ENCODE measurements at regions of chr21 and their contacts with region 1.

Region 1: DNA sequence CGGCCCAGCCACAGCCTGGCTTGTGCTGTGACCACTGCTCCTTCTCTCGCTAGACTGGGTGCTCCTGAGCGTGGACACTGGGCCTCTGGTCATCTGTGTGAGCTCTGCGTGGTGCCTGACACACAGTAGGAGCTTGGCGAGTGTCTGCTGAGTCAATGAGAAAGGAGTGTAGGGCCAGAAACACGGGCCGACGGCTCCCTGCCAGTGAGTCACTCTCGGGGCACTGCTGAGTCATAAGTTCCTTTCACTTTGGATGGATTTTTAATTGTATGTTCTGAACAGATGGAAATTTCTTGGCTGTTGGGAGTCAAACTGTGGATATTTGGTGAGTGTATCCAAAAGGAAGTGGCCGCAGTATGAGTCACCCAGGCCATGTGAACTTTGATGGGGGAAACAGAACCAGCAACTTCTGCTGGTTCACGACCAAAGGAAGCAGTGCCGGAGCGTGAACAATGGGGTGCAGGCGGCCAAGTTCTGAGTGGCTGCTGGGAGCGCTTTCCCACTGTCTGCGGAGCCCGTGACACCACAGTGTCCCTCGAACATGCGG is 41.0 kb upstream of the COL18A1 start:
- DNase-seq: peak; percentile 83 to 96
- H3K4me3 ChIP-seq: peak overlapping the region in 1 of 2 donors; percentile 36
- H3K27ac ChIP-seq: peak overlapping the region; percentile 98 to 99
- H3K4me1 ChIP-seq: peaks cover 21 to 44% of the 10 kb centered on the region in 2 donors
- H3K27me3 ChIP-seq: no peaks in the 10 kb centered on the region
- CTCF ChIP-seq: no peak

Region 2: GRCh38 chr21:44897326-44898010 is 466.5 kb before region 1 on chr21:
- intact Hi-C with region 1: no loop called
- DNase-seq: no peak
- H3K4me3 ChIP-seq: no peak overlapping the region
- H3K27ac ChIP-seq: no peak overlapping the region
- H3K4me1 ChIP-seq: no peaks in the 10 kb centered on the region
- H3K27me3 ChIP-seq: no peaks in the 10 kb centered on the region
- CTCF ChIP-seq: no peak

Region 3: GRCh38 chr21:45074048-45074817 is 289.8 kb before region 1 on chr21 and contains the start of gene ADARB1:
- intact Hi-C with region 1: no loop called
- DNase-seq: peak in 1 of 2 donors; percentile 74
- H3K4me3 ChIP-seq: peak within 1 kb of the TSS; percentile 81 to 98
- H3K27ac ChIP-seq: peak within 1 kb of the TSS; percentile 91
- H3K4me1 ChIP-seq: peaks cover 1 to 21% of the 10 kb centered on the region in 2 donors
- H3K27me3 ChIP-seq: no peaks in the 10 kb centered on the region
- CTCF ChIP-seq: no peak
- total RNA-seq, gene ADARB1: 82.9 TPM

Region 4: GRCh38 chr21:45294509-45295291 is 69.3 kb before region 1 on chr21:
- intact Hi-C with region 1: loop called (anchors 2 kb)
- DNase-seq: peak; percentile 68 to 97
- H3K4me3 ChIP-seq: peak overlapping the region in 1 of 2 donors; percentile 15
- H3K27ac ChIP-seq: peak overlapping the region; percentile 78 to 99
- H3K4me1 ChIP-seq: peaks cover 21 to 30% of the 10 kb centered on the region in 2 donors
- H3K27me3 ChIP-seq: no peaks in the 10 kb centered on the region
- CTCF ChIP-seq: no peak

Region 5: GRCh38 chr21:45386721-45387371 is 22.9 kb after region 1 on chr21:
- intact Hi-C with region 1: no loop called
- DNase-seq: peak in 1 of 2 donors; percentile 81
- H3K4me3 ChIP-seq: no peak overlapping the region
- H3K27ac ChIP-seq: peak overlapping the region in 1 of 2 donors; percentile 19
- H3K4me1 ChIP-seq: peaks cover 0 to 12% of the 10 kb centered on the region in 2 donors
- H3K27me3 ChIP-seq: no peaks in the 10 kb centered on the region
- CTCF ChIP-seq: peak in 2 of 3 experiments; percentile 23 to 42

Region 6: GRCh38 chr21:45680215-45680614 is 316.2 kb after region 1 on chr21:
- intact Hi-C with region 1: no loop called
- DNase-seq: no peak
- H3K4me3 ChIP-seq: no peak overlapping the region
- H3K27ac ChIP-seq: no peak overlapping the region
- H3K4me1 ChIP-seq: peaks cover 0 to 3% of the 10 kb centered on the region in 2 donors
- H3K27me3 ChIP-seq: no peaks in the 10 kb centered on the region
- CTCF ChIP-seq: no peak